ENCODE measurements at regions of chr9 and their contacts with region 1.

Region 1: GRCh38 chr9:93095205-93096130 is 549 bp upstream of the CARD19 start:
- DNase-seq: peak; percentile 100
- H3K4me3 ChIP-seq: peak overlapping the region in 1 of 2 donors; percentile 93
- H3K4me3 Mint-ChIP-seq: peak overlapping the region; percentile 82 to 93 (median 87)
- H3K27ac ChIP-seq: peak overlapping the region; percentile 95
- H3K27ac Mint-ChIP-seq: peak overlapping the region; percentile 87 to 99 (median 98)
- H3K4me1 ChIP-seq: peaks cover 69% of the 10 kb centered on the region
- H3K4me1 Mint-ChIP-seq: peaks cover 47 to 86% (median 70%) of the 10 kb centered on the region in 4 donors
- H3K27me3 ChIP-seq: no peaks in the 10 kb centered on the region
- H3K27me3 Mint-ChIP-seq: no peaks in the 10 kb centered on the region

Region 2: DNA sequence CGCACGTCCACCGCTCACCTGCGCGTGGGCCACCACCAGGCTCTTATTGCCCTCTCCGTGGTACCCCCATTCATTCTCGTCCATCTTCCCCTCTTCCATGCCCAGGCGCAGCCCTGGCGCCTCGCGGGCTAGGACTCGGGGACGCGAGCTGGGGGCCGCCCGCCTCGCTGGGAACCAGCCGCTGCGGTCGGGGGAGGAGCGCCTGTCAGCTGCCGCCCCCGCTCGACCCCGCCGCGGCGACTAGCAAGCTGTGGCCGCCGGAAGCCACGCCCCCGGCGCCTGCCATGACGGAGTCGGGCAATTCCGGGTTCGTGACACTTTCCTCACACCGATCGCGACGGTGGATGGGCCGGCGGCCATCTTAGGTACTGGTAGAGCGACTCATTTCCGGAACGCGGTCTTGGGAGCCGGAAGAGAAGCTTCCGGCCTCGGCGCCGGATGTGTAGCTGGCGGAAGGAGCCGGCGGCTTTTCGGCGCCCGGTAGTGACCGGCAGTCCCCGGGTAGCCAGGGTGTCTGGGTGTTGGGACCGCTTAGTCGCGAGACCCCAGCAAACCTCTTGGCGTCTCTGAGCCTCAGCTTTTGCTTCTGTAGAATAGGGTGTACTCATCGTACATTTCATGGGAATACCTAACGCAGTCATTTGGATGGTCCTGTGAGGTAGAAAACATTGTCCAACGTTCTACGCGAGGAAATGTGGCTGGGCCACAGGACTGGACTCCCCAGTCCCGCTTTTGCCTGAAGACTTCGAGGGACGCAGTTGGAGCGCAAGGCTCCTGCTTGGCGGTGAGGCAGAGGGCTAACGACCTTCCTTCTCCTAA is 425.4 kb before region 1 on chr9 and contains the start of gene IPPK:
- CTCF ChIA-PET with region 1: no interaction called
- POLR2A ChIA-PET with region 1: interaction called, 3 read pairs
- intact Hi-C with region 1: loop called (anchors 1 kb)
- DNase-seq: peak; percentile 95 to 98 (median 97)
- H3K4me3 ChIP-seq: peak within 1 kb of the TSS; percentile 89 to 90
- H3K4me3 Mint-ChIP-seq: peak within 1 kb of the TSS; percentile 94 to 99 (median 96)
- H3K27ac ChIP-seq: peak within 1 kb of the TSS; percentile 97
- H3K27ac Mint-ChIP-seq: peak within 1 kb of the TSS; percentile 97 to 99 (median 98)
- H3K4me1 ChIP-seq: peaks cover 29% of the 10 kb centered on the region
- H3K4me1 Mint-ChIP-seq: peaks cover 24 to 45% (median 35%) of the 10 kb centered on the region in 4 donors
- H3K27me3 ChIP-seq: no peaks in the 10 kb centered on the region
- H3K27me3 Mint-ChIP-seq: no peaks in the 10 kb centered on the region
- total RNA-seq, gene IPPK: 7.2 to 7.9 TPM

Region 3: GRCh38 chr9:92795598-92796336 is 299.7 kb before region 1 on chr9:
- CTCF ChIA-PET with region 1: no interaction called
- POLR2A ChIA-PET with region 1: no interaction called
- intact Hi-C with region 1: no loop called
- DNase-seq: no peak
- H3K4me3 ChIP-seq: no peak overlapping the region
- H3K4me3 Mint-ChIP-seq: no peak overlapping the region
- H3K27ac ChIP-seq: no peak overlapping the region
- H3K27ac Mint-ChIP-seq: no peak overlapping the region
- H3K4me1 ChIP-seq: no peaks in the 10 kb centered on the region
- H3K4me1 Mint-ChIP-seq: peaks cover 2 to 3% (median 2%) of the 10 kb centered on the region in 4 donors
- H3K27me3 ChIP-seq: peaks cover 7% of the 10 kb centered on the region
- H3K27me3 Mint-ChIP-seq: peaks cover 12 to 28% of the 10 kb centered on the region in 2 donors

Region 4: DNA sequence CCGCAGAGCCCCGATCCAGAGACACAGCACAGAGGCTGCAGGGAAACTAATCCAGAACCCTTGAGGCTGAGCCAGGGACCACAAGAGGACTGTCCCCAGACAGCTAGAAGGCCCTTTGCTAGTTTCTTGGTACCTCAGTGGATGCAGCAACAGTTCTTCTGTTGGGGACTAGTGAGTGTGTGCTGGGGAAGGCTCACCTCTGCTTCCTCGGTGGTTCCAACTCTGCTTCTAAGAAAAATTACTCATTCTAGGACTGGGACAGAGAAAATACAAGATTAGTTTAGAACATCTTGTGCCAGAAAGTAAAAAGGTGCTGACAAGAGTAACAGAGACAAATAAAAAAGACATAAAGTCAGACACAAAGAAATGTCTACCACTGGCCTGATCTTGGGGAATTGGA is 198.1 kb before region 1 on chr9:
- CTCF ChIA-PET with region 1: no interaction called
- POLR2A ChIA-PET with region 1: no interaction called
- intact Hi-C with region 1: no loop called
- DNase-seq: no peak
- H3K4me3 ChIP-seq: no peak overlapping the region
- H3K4me3 Mint-ChIP-seq: no peak overlapping the region
- H3K27ac ChIP-seq: no peak overlapping the region
- H3K27ac Mint-ChIP-seq: peak overlapping the region in 1 of 7 donors; percentile 19
- H3K4me1 ChIP-seq: no peaks in the 10 kb centered on the region
- H3K4me1 Mint-ChIP-seq: peaks cover 1 to 7% (median 4%) of the 10 kb centered on the region in 4 donors
- H3K27me3 ChIP-seq: no peaks in the 10 kb centered on the region
- H3K27me3 Mint-ChIP-seq: no peaks in the 10 kb centered on the region

Region 5: GRCh38 chr9:92954049-92954861 is 141.2 kb before region 1 on chr9:
- CTCF ChIA-PET with region 1: interaction called, 5 read pairs
- POLR2A ChIA-PET with region 1: interaction called, 8 read pairs
- intact Hi-C with region 1: loop called (anchors 1 kb)
- DNase-seq: peak; percentile 87 to 95 (median 90)
- H3K4me3 ChIP-seq: peak overlapping the region; percentile 49 to 57
- H3K4me3 Mint-ChIP-seq: peak overlapping the region; percentile 86 to 92 (median 88)
- H3K27ac ChIP-seq: peak overlapping the region; percentile 75
- H3K27ac Mint-ChIP-seq: peak overlapping the region; percentile 89 to 100 (median 99)
- H3K4me1 ChIP-seq: peaks cover 91% of the 10 kb centered on the region
- H3K4me1 Mint-ChIP-seq: peaks cover 65 to 91% (median 78%) of the 10 kb centered on the region in 4 donors
- H3K27me3 ChIP-seq: no peaks in the 10 kb centered on the region
- H3K27me3 Mint-ChIP-seq: no peaks in the 10 kb centered on the region

Region 6: DNA sequence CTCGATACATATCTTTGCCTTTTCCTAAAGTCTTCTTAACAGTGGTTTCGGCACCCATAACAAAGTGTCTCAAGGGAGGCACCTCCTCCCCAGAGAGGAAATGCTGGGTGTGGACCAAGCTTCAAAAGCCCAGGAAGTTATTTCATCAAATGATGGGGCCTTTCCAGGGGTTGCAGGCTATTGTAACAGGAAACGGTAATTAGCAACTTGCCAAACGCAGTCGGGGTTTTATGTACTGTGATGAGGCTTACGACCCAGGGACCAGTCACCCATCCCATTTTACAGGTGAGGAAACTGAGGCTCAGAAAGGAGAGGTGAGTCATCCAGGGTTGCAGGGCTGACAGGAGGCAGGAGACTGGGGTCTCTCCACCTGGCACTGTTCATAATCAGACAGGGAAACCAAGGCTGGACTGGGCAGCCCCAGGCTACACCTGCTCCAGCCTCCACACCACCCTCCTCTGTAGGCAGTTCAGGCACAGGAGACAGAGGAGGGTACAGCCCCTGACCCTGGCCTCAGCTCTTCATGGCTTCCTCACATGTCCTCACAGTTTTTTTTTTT is 66.9 kb before region 1 on chr9:
- CTCF ChIA-PET with region 1: interaction called, 3 read pairs
- POLR2A ChIA-PET with region 1: interaction called, 65 read pairs
- intact Hi-C with region 1: loop called (anchors 1 kb)
- DNase-seq: peak; percentile 84 to 94 (median 89)
- H3K4me3 ChIP-seq: peak overlapping the region; percentile 52 to 55
- H3K4me3 Mint-ChIP-seq: peak overlapping the region; percentile 82 to 90 (median 86)
- H3K27ac ChIP-seq: peak overlapping the region; percentile 91
- H3K27ac Mint-ChIP-seq: peak overlapping the region; percentile 94 to 99 (median 96)
- H3K4me1 ChIP-seq: peaks cover 95% of the 10 kb centered on the region
- H3K4me1 Mint-ChIP-seq: peaks cover 43 to 95% (median 78%) of the 10 kb centered on the region in 4 donors
- H3K27me3 ChIP-seq: no peaks in the 10 kb centered on the region
- H3K27me3 Mint-ChIP-seq: no peaks in the 10 kb centered on the region

Region 7: DNA sequence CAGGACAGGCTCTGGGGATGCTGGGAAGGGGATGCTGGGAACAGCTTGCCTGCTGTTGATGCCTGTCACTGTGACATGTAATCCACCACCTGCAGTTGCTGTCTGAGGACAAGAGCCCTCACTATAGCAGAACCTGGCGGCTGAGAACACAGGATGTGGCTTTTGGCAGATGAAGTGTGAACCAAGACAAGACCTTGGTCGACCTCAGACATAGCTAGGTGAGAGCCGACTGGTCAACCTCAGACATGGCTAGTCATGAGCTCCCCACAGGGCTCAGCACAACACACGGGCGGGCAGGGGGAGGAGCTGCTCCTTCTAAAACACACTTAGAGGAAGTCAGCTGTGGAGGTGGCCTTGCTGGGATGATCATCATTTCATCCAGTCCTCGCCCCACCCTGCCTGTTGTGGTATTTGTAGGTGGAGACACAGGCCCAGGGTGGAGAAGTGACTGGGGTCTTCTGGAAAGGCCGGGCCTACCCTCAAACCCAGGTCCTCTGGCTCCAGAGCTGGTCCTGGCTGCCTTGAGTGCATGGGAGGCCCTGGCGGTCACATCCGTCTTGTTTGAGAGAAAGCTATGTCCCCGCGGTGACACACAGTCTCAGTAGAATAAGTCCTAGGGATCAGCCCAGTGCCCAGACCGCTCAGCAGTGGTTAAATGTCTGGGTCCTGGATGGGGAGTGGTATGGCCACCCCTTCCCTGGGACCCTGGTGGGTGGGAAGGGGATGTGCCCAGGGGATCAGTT is 30.9 kb before region 1 on chr9:
- CTCF ChIA-PET with region 1: interaction called, 5 read pairs
- POLR2A ChIA-PET with region 1: interaction called, 96 read pairs
- intact Hi-C with region 1: loop called (anchors 1 kb)
- DNase-seq: peak; percentile 90 to 96 (median 92)
- H3K4me3 ChIP-seq: peak overlapping the region in 1 of 2 donors; percentile 47
- H3K4me3 Mint-ChIP-seq: peak overlapping the region; percentile 87 to 95 (median 91)
- H3K27ac ChIP-seq: peak overlapping the region; percentile 72
- H3K27ac Mint-ChIP-seq: peak overlapping the region; percentile 96 to 100 (median 99)
- H3K4me1 ChIP-seq: peaks cover 98% of the 10 kb centered on the region
- H3K4me1 Mint-ChIP-seq: peaks cover 68 to 97% (median 82%) of the 10 kb centered on the region in 4 donors
- H3K27me3 ChIP-seq: no peaks in the 10 kb centered on the region
- H3K27me3 Mint-ChIP-seq: no peaks in the 10 kb centered on the region

Region 8: GRCh38 chr9:93134015-93134739 is 38.7 kb after region 1 on chr9 and contains the start of gene NINJ1:
- CTCF ChIA-PET with region 1: interaction called, 3 read pairs
- POLR2A ChIA-PET with region 1: interaction called, 13 read pairs
- intact Hi-C with region 1: loop called (anchors 2 kb)
- DNase-seq: peak; percentile 87 to 96 (median 89)
- H3K4me3 ChIP-seq: peak within 1 kb of the TSS; percentile 52 to 82
- H3K4me3 Mint-ChIP-seq: peak within 1 kb of the TSS; percentile 88 to 96 (median 90)
- H3K27ac ChIP-seq: peak within 1 kb of the TSS; percentile 92
- H3K27ac Mint-ChIP-seq: peak within 1 kb of the TSS; percentile 97 to 99 (median 99)
- H3K4me1 ChIP-seq: peaks cover 48% of the 10 kb centered on the region
- H3K4me1 Mint-ChIP-seq: peaks cover 26 to 79% (median 50%) of the 10 kb centered on the region in 4 donors
- H3K27me3 ChIP-seq: no peaks in the 10 kb centered on the region
- H3K27me3 Mint-ChIP-seq: no peaks in the 10 kb centered on the region
- total RNA-seq, gene NINJ1: 31.1 to 31.3 TPM

Region 9: DNA sequence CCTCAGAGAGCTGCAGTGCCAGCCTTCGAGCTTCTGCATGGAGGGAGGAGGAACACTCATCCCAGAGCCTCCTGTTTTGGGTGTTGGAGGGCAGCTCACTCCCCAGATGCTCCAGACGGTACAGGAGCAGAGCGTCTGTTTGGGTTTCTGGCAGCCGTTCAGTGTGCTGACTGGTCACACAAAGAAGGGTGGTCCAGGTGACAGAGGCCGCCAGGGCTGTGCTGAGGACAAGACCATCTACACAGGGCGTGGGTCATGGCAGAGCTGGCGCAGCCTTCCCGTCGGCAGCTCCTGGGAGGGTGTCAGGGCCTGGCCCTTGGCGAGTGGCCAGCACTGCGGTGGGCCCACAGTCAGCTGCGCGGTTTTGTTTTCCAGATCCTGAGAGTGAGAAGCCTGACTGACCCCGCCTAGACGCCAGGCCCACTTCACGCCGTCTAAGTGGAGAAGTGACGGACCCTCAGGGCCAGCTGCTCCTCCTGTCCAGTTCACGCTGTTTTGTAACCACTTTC is 224.6 kb after region 1 on chr9:
- CTCF ChIA-PET with region 1: no interaction called
- POLR2A ChIA-PET with region 1: no interaction called
- intact Hi-C with region 1: no loop called
- DNase-seq: no peak
- H3K4me3 ChIP-seq: no peak overlapping the region
- H3K4me3 Mint-ChIP-seq: no peak overlapping the region
- H3K27ac ChIP-seq: no peak overlapping the region
- H3K27ac Mint-ChIP-seq: no peak overlapping the region
- H3K4me1 ChIP-seq: no peaks in the 10 kb centered on the region
- H3K4me1 Mint-ChIP-seq: peaks cover 3 to 6% (median 5%) of the 10 kb centered on the region in 4 donors
- H3K27me3 ChIP-seq: peaks cover 8% of the 10 kb centered on the region
- H3K27me3 Mint-ChIP-seq: peaks cover 6 to 20% of the 10 kb centered on the region in 2 donors

Region 10: GRCh38 chr9:94166237-94166963 is 1070.9 kb after region 1 on chr9:
- CTCF ChIA-PET with region 1: no interaction called
- POLR2A ChIA-PET with region 1: no interaction called
- intact Hi-C with region 1: loop called (anchors 10 kb)
- DNase-seq: peak; percentile 93 to 96 (median 94)
- H3K4me3 ChIP-seq: peak overlapping the region in 1 of 2 donors; percentile 80
- H3K4me3 Mint-ChIP-seq: peak overlapping the region; percentile 79 to 98 (median 90)
- H3K27ac ChIP-seq: peak overlapping the region; percentile 98
- H3K27ac Mint-ChIP-seq: peak overlapping the region; percentile 90 to 96 (median 95)
- H3K4me1 ChIP-seq: peaks cover 48% of the 10 kb centered on the region
- H3K4me1 Mint-ChIP-seq: peaks cover 34 to 64% (median 45%) of the 10 kb centered on the region in 4 donors
- H3K27me3 ChIP-seq: no peaks in the 10 kb centered on the region
- H3K27me3 Mint-ChIP-seq: no peaks in the 10 kb centered on the region

Measured in CD4-positive, alpha-beta memory T cell (primary cell).